ENCODE measurements at regions of chr4 and their contacts with region 1.

Region 1: GRCh38 chr4:99234331-99235010 is 15.4 kb upstream of the ADH6 start:
- DNase-seq: no peak
- ATAC-seq: no peak
- H3K4me3 Mint-ChIP-seq: no peak overlapping the region
- H3K27ac Mint-ChIP-seq: no peak overlapping the region
- H3K4me1 Mint-ChIP-seq: no peaks in the 10 kb centered on the region
- H3K27me3 Mint-ChIP-seq: peaks cover 5% of the 10 kb centered on the region

Region 2: GRCh38 chr4:99219479-99219878 is 15.0 kb before region 1 on chr4:
- CTCF ChIA-PET with region 1: no interaction called
- POLR2A ChIA-PET with region 1: no interaction called
- intact Hi-C with region 1: loop called in 1 of 2 experiments (anchors 2 kb)
- DNase-seq: no peak
- ATAC-seq: no peak
- H3K4me3 Mint-ChIP-seq: no peak overlapping the region
- H3K27ac Mint-ChIP-seq: no peak overlapping the region
- H3K4me1 Mint-ChIP-seq: no peaks in the 10 kb centered on the region
- H3K27me3 Mint-ChIP-seq: peaks cover 2% of the 10 kb centered on the region

Measured in activated CD4-positive, alpha-beta T cell treated with anti-CD3 and anti-CD28 coated beads for 36 hours (primary cell).